ENCODE measurements at regions of chr12 and their contacts with region 1.

Region 1: DNA sequence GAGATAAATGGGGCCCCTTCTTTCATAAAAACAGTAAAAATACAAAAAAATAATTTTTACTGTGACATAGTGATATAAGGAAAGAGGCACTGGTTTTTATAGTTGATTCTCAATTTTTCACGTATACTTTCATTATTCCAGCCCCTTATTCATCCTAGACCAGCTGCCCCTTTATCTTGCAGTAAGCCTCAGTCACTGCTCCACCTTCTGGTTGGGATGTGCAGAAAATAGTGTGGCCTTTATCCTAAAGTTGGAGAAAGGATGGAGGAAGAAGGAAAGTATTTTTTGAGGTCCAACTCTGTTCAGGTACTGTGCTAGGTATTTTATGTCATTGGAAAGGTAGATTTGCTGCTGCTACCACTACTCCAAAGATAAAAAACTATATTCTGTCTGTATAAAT is 172.7 kb downstream of the ANO6 start:
- DNase-seq: no peak
- H3K4me3 Mint-ChIP-seq: no peak overlapping the region
- H3K27ac Mint-ChIP-seq: no peak overlapping the region
- H3K4me1 Mint-ChIP-seq: no peaks in the 10 kb centered on the region
- H3K27me3 Mint-ChIP-seq: no peaks in the 10 kb centered on the region

Region 2: DNA sequence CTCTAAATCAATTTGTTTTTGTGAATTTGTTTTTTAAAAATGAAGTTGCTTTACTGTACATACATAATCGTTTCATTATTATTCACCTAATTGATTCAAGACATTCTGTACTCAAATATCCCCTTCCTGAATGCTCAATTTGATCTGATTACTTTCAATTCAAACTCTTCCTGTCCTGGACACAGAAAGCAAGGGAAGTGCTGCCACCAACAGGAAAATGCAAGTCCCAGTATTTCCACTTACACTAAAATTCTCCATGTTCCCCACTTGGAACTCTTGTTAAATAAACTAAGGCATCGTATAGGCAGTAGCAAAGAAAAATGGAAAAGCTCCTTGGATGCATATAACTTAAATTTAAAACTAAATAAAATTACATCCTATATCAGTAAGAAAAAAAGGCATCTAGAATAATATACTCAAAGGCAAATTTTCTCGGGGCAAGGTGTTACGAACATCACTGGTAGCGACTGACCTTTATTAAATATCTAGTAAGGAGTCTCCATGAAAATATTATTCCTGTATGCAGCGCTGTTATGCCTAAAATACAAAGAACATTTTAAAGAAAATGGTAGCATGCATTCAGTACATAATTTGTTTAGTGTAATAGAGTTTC is 265.7 kb before region 1 on chr12:
- intact Hi-C with region 1: no loop called
- DNase-seq: no peak
- H3K4me3 Mint-ChIP-seq: no peak overlapping the region
- H3K27ac Mint-ChIP-seq: no peak overlapping the region
- H3K4me1 Mint-ChIP-seq: no peaks in the 10 kb centered on the region
- H3K27me3 Mint-ChIP-seq: peaks cover 6% of the 10 kb centered on the region

Region 3: DNA sequence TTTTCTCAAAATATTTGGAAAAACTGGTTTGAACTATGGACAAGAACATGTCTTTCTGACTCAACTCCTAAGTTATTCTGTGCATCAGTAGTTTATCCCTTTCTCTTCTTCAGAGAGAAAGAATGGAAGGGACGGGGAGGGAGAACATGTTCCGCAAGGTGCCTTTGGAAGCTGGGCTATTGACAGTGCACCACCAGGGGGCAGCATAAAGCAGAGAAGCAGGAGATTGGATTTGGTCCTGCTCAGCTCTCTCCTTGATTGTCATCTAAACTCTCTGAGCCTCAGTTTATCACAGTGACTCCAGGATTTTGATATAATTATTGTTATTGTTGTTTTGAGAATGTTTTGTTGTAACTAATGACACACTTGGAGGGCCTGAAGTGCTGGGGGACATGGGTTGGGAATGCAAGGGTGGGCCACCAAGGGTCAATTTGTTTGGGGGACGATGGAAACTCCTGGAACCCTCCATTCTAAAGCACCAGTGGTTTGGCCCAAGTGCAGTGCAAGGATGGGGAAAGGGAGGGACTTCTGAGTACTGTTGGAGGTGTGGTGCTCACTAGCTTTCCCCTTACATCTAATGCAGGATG is 218.0 kb before region 1 on chr12:
- intact Hi-C with region 1: loop called (anchors 1 kb)
- DNase-seq: peak; percentile 57
- H3K4me3 Mint-ChIP-seq: no peak overlapping the region
- H3K27ac Mint-ChIP-seq: no peak overlapping the region
- H3K4me1 Mint-ChIP-seq: no peaks in the 10 kb centered on the region
- H3K27me3 Mint-ChIP-seq: peaks cover 7% of the 10 kb centered on the region

Region 4: DNA sequence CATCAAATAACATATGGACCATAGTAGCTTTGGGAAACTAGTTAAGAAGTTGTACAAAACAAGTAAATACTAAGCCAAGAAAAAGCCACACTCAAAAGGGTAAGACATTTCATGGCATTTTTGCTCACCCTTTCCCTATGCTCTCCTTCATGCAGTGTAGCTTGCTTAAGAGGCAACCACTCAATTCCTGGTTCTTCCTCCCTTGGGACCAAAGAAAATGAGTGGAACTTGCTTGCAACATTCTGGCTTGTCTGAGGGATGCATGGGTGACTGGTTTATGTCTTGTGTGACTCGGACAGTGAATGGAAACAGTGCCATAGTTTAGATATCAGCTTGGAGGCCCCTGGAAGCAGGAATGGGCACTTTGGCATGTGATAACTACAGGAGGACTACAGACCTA is 89.0 kb after region 1 on chr12:
- intact Hi-C with region 1: no loop called
- DNase-seq: no peak
- H3K4me3 Mint-ChIP-seq: no peak overlapping the region
- H3K27ac Mint-ChIP-seq: no peak overlapping the region
- H3K4me1 Mint-ChIP-seq: no peaks in the 10 kb centered on the region
- H3K27me3 Mint-ChIP-seq: peaks cover 4% of the 10 kb centered on the region